Breast epithelium (tissue), 4 donors: ENCODE measurements at regions of chr9 and their contacts with region 1.

Region 1: GRCh38 chr9:131478421-131478868 is 24.3 kb upstream of the POMT1 start:
- DNase-seq: no peak
- H3K4me3 ChIP-seq: no peak overlapping the region
- H3K27ac ChIP-seq: peak overlapping the region; percentile 7 to 42
- H3K4me1 ChIP-seq: peaks cover 2 to 6% of the 10 kb centered on the region in 2 donors
- H3K27me3 ChIP-seq: no peaks in the 10 kb centered on the region
- CTCF ChIP-seq: peak; percentile 21 to 52 (median 44)
- POLR2A ChIP-seq: no peak

Region 2: GRCh38 chr9:131393622-131394463 is 84.6 kb before region 1 on chr9 and contains the start of gene PRRC2B:
- intact Hi-C with region 1: loop called (anchors 10 kb)
- DNase-seq: peak; percentile 70 to 87
- H3K4me3 ChIP-seq: peak within 1 kb of the TSS; percentile 66 to 89 (median 73)
- H3K27ac ChIP-seq: peak within 1 kb of the TSS; percentile 99 to 100
- H3K4me1 ChIP-seq: peaks cover 19 to 28% of the 10 kb centered on the region in 2 donors
- H3K27me3 ChIP-seq: no peaks in the 10 kb centered on the region
- CTCF ChIP-seq: no peak
- POLR2A ChIP-seq: no peak
- total RNA-seq, gene PRRC2B: 95.9 to 143 (median 102) TPM

Region 3: DNA sequence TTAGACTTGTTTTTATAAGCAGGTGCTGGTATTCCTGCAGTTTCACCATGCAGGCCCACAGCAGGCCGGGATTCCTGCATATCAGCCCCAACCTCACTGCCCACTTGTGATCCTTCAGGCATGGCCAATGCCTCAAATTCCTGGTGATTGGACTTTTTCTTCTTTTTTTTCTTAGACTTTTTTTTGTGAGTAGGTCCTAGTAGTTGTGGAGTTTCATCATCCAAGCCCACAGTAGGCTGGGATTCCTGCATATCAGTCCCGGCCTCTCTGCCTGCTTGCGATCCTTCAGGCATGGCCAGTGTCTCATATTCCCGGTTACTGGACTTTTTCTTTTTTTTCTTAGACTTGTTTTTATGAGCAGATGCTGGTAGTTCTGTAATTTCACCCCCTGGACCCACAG is 923.4 kb after region 1 on chr9:
- intact Hi-C with region 1: no loop called
- DNase-seq: no peak
- H3K4me3 ChIP-seq: no peak overlapping the region
- H3K27ac ChIP-seq: no peak overlapping the region
- H3K4me1 ChIP-seq: peaks cover 0 to 8% of the 10 kb centered on the region in 2 donors
- H3K27me3 ChIP-seq: no peaks in the 10 kb centered on the region
- CTCF ChIP-seq: no peak
- POLR2A ChIP-seq: no peak